ENCODE measurements at regions of chr3 and their contacts with region 1.

Region 1: GRCh38 chr3:37210230-37210629 is 35.8 kb upstream of the LRRFIP2 start:
- DNase-seq: no peak
- ATAC-seq: no peak
- H3K4me3 ChIP-seq: no peak overlapping the region
- H3K4me3 Mint-ChIP-seq: no peak overlapping the region
- H3K27ac ChIP-seq: no peak overlapping the region
- H3K27ac Mint-ChIP-seq: no peak overlapping the region
- H3K4me1 ChIP-seq: no peaks in the 10 kb centered on the region
- H3K4me1 Mint-ChIP-seq: peaks cover 0 to 8% (median 0%) of the 10 kb centered on the region in 7 donors
- H3K27me3 ChIP-seq: no peaks in the 10 kb centered on the region
- H3K27me3 Mint-ChIP-seq: peaks cover 0 to 3% (median 0%) of the 10 kb centered on the region in 5 donors

Region 2: GRCh38 chr3:36729204-36730056 is 480.8 kb before region 1 on chr3:
- CTCF ChIA-PET with region 1: interaction called, 3 read pairs
- POLR2A ChIA-PET with region 1: no interaction called
- intact Hi-C with region 1: loop called in 1 of 2 experiments (anchors 1 kb)
- DNase-seq: peak in 4 of 9 donors; percentile 5 to 25 (median 18)
- ATAC-seq: peak; percentile 56
- H3K4me3 ChIP-seq: no peak overlapping the region
- H3K4me3 Mint-ChIP-seq: no peak overlapping the region
- H3K27ac ChIP-seq: no peak overlapping the region
- H3K27ac Mint-ChIP-seq: no peak overlapping the region
- H3K4me1 ChIP-seq: no peaks in the 10 kb centered on the region
- H3K4me1 Mint-ChIP-seq: no peaks in the 10 kb centered on the region
- H3K27me3 ChIP-seq: no peaks in the 10 kb centered on the region
- H3K27me3 Mint-ChIP-seq: peaks cover 0 to 12% (median 7%) of the 10 kb centered on the region in 5 donors

Region 3: GRCh38 chr3:37024092-37024491 is 186.1 kb before region 1 on chr3:
- CTCF ChIA-PET with region 1: interaction called, 3 read pairs
- POLR2A ChIA-PET with region 1: no interaction called
- intact Hi-C with region 1: loop called (anchors 1 kb)
- DNase-seq: peak in 3 of 9 donors; percentile 2 to 12 (median 11)
- ATAC-seq: no peak
- H3K4me3 ChIP-seq: no peak overlapping the region
- H3K4me3 Mint-ChIP-seq: no peak overlapping the region
- H3K27ac ChIP-seq: no peak overlapping the region
- H3K27ac Mint-ChIP-seq: no peak overlapping the region
- H3K4me1 ChIP-seq: no peaks in the 10 kb centered on the region
- H3K4me1 Mint-ChIP-seq: peaks cover 0 to 11% (median 5%) of the 10 kb centered on the region in 7 donors
- H3K27me3 ChIP-seq: no peaks in the 10 kb centered on the region
- H3K27me3 Mint-ChIP-seq: no peaks in the 10 kb centered on the region

Region 4: DNA sequence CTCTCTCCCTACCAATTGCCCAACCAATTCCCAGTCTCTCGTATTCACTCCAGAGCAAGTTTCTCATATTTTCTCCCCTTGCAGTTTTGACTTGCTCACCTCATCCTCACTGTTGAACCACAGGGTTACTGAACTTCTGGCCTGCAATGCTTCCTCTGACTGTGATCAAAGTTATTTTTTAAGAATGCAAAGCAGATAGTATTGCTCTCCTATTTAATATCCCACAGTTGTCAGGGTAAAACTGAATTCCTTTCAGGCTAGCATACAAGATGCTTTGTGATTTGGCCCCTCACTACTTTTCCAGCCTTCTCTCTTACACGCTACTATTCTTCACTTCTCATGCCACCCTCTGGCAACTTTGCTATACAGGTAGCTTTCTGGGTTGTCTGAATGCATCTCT is 116.7 kb before region 1 on chr3:
- CTCF ChIA-PET with region 1: no interaction called
- POLR2A ChIA-PET with region 1: no interaction called
- intact Hi-C with region 1: loop called in 1 of 2 experiments (anchors 5 kb)
- DNase-seq: no peak
- ATAC-seq: no peak
- H3K4me3 ChIP-seq: no peak overlapping the region
- H3K4me3 Mint-ChIP-seq: no peak overlapping the region
- H3K27ac ChIP-seq: no peak overlapping the region
- H3K27ac Mint-ChIP-seq: peak overlapping the region in 1 of 9 donors; percentile 34
- H3K4me1 ChIP-seq: no peaks in the 10 kb centered on the region
- H3K4me1 Mint-ChIP-seq: peaks cover 0 to 6% (median 0%) of the 10 kb centered on the region in 7 donors
- H3K27me3 ChIP-seq: no peaks in the 10 kb centered on the region
- H3K27me3 Mint-ChIP-seq: no peaks in the 10 kb centered on the region